ENCODE measurements at regions of chr2 and their contacts with region 1.

Region 1: DNA sequence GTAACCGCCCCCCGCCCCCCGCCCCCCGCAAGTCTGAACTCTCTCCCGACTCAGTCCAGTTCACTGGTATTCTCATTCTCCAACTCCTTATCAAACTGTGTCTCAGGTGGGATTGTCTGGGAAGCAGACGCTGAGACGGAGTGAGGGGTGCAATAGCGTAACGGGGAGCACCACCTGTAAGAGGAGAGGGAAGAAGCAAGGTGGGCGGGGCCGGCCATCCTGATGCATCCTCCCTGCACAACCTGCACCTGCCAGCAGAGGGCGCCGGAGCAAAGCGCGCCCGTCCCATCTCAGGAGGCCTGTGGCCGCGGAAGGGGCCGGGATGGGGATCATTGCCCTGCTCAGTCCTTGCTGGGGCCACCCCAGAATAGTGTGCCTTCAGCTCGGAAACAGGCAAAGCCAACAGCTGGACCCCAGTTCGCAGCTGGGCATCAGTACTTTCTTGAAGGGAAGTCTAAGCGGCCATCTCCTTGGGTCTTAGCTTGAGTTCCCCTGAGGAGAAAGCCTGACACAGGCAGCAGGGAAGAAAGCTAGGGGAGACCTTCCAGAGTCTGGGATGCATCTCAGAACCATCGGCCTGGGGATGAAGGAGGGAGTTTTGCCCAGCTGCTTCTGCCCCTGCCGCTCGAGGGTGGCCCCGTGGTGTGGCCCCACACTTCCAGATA is 208.0 kb downstream of the TFCP2L1 start:
- DNase-seq: peak; percentile 56
- H3K4me3 ChIP-seq: no peak overlapping the region
- H3K27ac ChIP-seq: no peak overlapping the region
- H3K4me1 ChIP-seq: peaks cover 7% of the 10 kb centered on the region
- H3K27me3 ChIP-seq: no peaks in the 10 kb centered on the region
- CTCF ChIP-seq: peak; percentile 96 to 97

Region 2: DNA sequence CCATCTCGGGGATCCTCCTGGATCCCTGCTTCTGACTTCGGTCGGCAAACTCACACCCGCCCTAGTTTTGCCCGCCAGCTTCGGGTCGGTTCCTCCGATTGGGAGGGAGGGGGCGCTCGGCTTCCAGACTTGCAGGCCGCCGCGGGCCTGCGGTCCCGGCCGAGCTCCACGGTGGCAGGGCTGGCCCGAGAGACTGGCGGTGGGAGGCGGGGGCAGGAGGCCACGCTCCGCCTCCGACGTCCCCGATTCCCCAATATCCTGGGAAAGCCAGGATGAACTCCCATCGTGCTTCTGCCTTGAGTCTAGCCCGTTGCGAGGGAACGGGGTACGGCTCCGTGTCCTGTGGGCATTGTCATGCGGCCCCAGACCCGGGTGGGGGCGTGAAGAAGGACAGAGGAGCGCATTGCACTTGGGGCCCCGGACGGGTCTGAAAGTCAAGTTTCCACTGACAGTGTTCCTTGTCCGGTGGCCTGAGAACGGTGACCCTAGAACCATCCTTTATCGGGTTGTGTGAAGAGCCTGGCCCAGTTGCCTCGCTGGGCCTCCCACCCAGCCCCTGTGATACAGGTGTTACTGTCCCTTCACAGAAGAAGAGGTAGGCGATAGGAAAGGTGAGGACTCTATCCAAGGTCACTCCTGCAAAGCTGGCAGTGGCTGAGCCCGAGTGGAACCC is 733.4 kb before region 1 on chr2:
- CTCF ChIA-PET with region 1: interaction called, 3 read pairs
- dilution Hi-C with region 1: no loop called
- in situ Hi-C with region 1: no loop called
- intact Hi-C with region 1: loop called (anchors 5 kb)
- DNase-seq: peak; percentile 57
- H3K4me3 ChIP-seq: peak overlapping the region in 1 of 3 experiments; percentile 3
- H3K27ac ChIP-seq: no peak overlapping the region
- H3K4me1 ChIP-seq: peaks cover 23% of the 10 kb centered on the region
- H3K27me3 ChIP-seq: peaks cover 44% of the 10 kb centered on the region
- CTCF ChIP-seq: peak; percentile 48 to 85

Region 3: GRCh38 chr2:120620025-120620793 is 456.8 kb before region 1 on chr2:
- CTCF ChIA-PET with region 1: no interaction called
- dilution Hi-C with region 1: no loop called
- in situ Hi-C with region 1: no loop called
- intact Hi-C with region 1: loop called (anchors 1 kb)
- DNase-seq: peak; percentile 94
- H3K4me3 ChIP-seq: no peak overlapping the region
- H3K27ac ChIP-seq: peak overlapping the region; percentile 91
- H3K4me1 ChIP-seq: peaks cover 18% of the 10 kb centered on the region
- H3K27me3 ChIP-seq: no peaks in the 10 kb centered on the region
- CTCF ChIP-seq: no peak

Region 4: GRCh38 chr2:120693121-120693520 is 383.9 kb before region 1 on chr2:
- CTCF ChIA-PET with region 1: no interaction called
- dilution Hi-C with region 1: no loop called
- in situ Hi-C with region 1: loop called (anchors 5 kb)
- intact Hi-C with region 1: loop called (anchors 1 kb)
- DNase-seq: peak; percentile 24
- H3K4me3 ChIP-seq: no peak overlapping the region
- H3K27ac ChIP-seq: no peak overlapping the region
- H3K4me1 ChIP-seq: no peaks in the 10 kb centered on the region
- H3K27me3 ChIP-seq: no peaks in the 10 kb centered on the region
- CTCF ChIP-seq: no peak

Region 5: GRCh38 chr2:121309801-121310200 is 232.8 kb after region 1 on chr2:
- CTCF ChIA-PET with region 1: interaction called, 3 read pairs
- dilution Hi-C with region 1: loop called (anchors 25 kb)
- in situ Hi-C with region 1: no loop called
- intact Hi-C with region 1: no loop called
- DNase-seq: no peak
- H3K4me3 ChIP-seq: no peak overlapping the region
- H3K27ac ChIP-seq: no peak overlapping the region
- H3K4me1 ChIP-seq: no peaks in the 10 kb centered on the region
- H3K27me3 ChIP-seq: no peaks in the 10 kb centered on the region
- CTCF ChIP-seq: no peak

Region 6: DNA sequence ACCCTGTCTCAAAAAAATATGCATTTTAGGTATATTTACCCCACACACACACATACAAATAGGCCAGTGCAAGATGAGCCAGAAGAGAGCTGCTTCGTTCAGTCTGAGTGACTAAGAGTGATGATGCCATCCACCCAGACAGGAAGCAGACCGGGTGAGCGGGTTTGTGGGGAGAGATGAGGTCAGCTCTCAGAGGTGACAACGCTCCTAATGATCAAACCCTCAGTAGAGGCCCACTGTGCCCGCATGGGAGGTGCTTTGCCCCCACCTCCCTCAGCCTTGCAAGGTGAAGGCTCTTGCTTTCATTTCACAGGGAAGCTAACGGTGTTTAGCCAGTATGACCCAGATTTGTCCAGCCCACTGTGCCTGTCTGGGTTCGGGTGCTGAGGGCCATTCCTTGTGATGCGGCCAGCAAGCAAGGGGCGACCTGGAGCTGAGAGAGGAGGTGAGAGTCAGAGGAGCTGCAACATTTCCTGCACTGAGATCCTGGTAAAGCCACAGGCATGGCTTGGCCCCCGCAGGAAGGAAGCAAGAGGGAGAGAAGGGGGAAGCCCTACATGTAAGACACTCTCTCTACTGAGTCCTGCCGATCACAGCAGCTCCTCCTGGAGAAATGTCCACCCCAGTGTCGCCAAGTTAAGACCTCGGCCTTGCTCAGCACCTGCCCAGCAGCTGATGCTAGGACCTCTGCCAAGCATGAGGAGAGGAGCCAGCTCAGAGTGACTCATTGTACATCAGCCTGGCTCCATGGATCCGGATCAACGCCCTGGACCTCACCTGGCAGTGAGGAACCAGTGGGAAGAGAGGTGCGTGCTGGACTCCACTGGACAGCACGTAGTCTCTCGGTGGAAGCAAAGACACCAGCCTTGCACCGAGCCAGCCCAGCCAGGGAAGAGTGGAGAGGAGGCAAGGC is 622.7 kb after region 1 on chr2:
- CTCF ChIA-PET with region 1: no interaction called
- dilution Hi-C with region 1: no loop called
- in situ Hi-C with region 1: loop called (anchors 25 kb)
- intact Hi-C with region 1: no loop called
- DNase-seq: peak; percentile 94
- H3K4me3 ChIP-seq: no peak overlapping the region
- H3K27ac ChIP-seq: peak overlapping the region; percentile 87
- H3K4me1 ChIP-seq: peaks cover 57% of the 10 kb centered on the region
- H3K27me3 ChIP-seq: no peaks in the 10 kb centered on the region
- CTCF ChIP-seq: no peak

Region 7: DNA sequence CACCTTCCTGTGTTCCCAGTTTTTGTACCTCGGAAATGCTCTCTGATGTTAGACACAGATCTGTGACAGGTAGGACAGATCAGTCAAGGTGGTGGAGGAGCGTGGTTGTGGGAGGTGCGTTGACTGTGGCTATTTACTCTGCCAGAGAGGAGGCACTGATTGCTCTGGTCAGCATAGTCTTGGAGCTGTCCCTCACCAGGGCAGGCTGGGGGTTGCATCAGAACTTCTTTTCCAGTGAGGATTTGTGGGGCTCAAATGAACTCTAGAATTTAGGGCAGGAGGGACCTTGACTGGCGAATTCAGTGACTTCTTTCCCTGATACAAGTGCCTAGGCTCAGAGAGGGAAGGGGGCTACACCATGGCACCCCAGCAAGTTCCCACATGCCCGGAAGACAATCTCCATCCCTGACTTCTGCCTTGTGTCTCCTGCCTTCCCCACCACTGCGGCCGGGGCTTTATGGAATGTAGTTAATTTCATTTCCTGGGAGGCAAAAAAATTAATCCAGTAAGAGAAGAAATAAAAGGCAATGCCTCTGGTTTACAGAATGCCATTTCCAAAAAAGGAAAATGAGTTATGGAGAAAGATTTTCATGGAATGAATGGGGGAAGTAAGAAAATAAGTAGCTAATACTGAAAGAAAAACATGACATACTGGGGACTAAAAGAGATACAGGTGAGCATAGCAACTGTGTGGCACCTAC is 633.6 kb after region 1 on chr2:
- CTCF ChIA-PET with region 1: no interaction called
- dilution Hi-C with region 1: no loop called
- in situ Hi-C with region 1: loop called (anchors 25 kb)
- intact Hi-C with region 1: loop called (anchors 10 kb)
- DNase-seq: peak; percentile 41
- H3K4me3 ChIP-seq: no peak overlapping the region
- H3K27ac ChIP-seq: no peak overlapping the region
- H3K4me1 ChIP-seq: peaks cover 30% of the 10 kb centered on the region
- H3K27me3 ChIP-seq: no peaks in the 10 kb centered on the region
- CTCF ChIP-seq: no peak